ENCODE measurements at regions of chr14 and their contacts with region 1.

Region 1: DNA sequence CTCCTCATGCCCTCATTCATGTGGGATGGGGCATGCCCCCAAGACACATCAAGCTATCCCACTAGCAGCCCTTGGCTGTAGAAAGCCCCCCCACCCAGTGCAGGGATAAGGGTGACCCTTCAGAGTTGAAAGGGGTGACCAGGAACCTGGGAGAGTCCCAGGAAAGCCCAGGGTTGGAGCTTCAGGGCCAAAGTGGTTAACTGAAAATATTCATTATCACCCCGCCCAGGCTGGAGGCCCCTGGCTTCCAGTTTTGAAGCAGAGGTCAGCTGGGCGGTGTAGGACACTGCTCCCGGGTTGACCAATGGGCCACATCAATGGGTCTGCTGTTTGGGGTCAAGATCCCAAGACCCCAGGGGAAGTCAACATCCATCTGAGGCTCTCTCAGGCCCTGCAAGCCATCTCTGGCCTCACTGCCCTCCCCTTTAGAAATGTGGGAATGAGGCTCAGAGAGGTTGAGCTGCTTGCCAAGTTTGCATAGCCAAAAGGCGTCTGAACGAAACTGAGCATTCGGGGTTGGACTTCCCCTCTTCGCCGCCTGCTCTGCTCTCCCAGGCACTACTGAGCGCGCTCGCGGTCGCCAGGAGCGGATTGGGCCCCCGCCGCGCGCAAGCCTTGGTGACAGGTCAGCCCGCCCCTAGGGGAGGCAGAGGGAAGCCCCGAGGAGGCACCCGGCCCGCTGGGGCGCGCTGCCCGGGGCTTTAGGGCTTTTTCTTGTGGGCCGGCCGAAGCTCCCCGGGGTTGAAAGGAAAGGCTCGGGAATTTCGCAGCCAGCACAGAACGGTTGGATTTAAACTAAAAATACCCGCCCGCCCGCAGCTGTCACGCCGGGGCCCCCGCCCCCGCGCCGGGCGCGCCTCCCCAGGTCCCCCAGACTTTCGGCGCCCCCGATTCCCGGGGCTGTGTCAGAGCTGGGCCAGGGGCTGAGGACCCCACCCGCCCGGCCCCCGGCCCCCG is 576 bp downstream of the SYNE3 start:
- DNase-seq: peak; percentile 78 to 90 (median 83)
- ATAC-seq: peak; percentile 43 to 74 (median 67)
- H3K4me3 ChIP-seq: peak overlapping the region; percentile 62 to 93 (median 78)
- H3K27ac ChIP-seq: peak overlapping the region; percentile 83 to 95 (median 90)
- H3K4me1 ChIP-seq: peaks cover 0 to 85% (median 56%) of the 10 kb centered on the region in 12 donors
- H3K27me3 ChIP-seq: no peaks in the 10 kb centered on the region
- CTCF ChIP-seq: peak in 10 of 12 donors; percentile 11 to 56 (median 42)
- POLR2A ChIP-seq: no peak

Region 2: GRCh38 chr14:94816113-94816512 is 699.8 kb before region 1 on chr14:
- intact Hi-C with region 1: no loop called
- DNase-seq: no peak
- ATAC-seq: no peak
- H3K4me3 ChIP-seq: no peak overlapping the region
- H3K27ac ChIP-seq: no peak overlapping the region
- H3K4me1 ChIP-seq: no peaks in the 10 kb centered on the region
- H3K27me3 ChIP-seq: peaks cover 0 to 26% (median 2%) of the 10 kb centered on the region in 9 donors
- CTCF ChIP-seq: no peak
- POLR2A ChIP-seq: no peak

Region 3: GRCh38 chr14:95472819-95473251 is 43.0 kb before region 1 on chr14:
- intact Hi-C with region 1: loop called in 2 of 10 experiments (anchors 5 kb)
- DNase-seq: peak in 1 of 5 donors; percentile 56
- ATAC-seq: peak; percentile 46 to 65 (median 52)
- H3K4me3 ChIP-seq: no peak overlapping the region
- H3K27ac ChIP-seq: peak overlapping the region in 4 of 12 donors; percentile 14 to 34 (median 22)
- H3K4me1 ChIP-seq: peaks cover 0 to 44% (median 30%) of the 10 kb centered on the region in 12 donors
- H3K27me3 ChIP-seq: no peaks in the 10 kb centered on the region
- CTCF ChIP-seq: no peak
- POLR2A ChIP-seq: no peak

Region 4: GRCh38 chr14:95483309-95484165 is 32.3 kb before region 1 on chr14:
- intact Hi-C with region 1: loop called in 2 of 10 experiments (anchors 5 kb)
- DNase-seq: peak; percentile 63 to 90 (median 79)
- ATAC-seq: peak; percentile 74 to 95 (median 93)
- H3K4me3 ChIP-seq: no peak overlapping the region
- H3K27ac ChIP-seq: peak overlapping the region; percentile 51 to 87 (median 74)
- H3K4me1 ChIP-seq: peaks cover 9 to 72% (median 34%) of the 10 kb centered on the region in 12 donors
- H3K27me3 ChIP-seq: no peaks in the 10 kb centered on the region
- CTCF ChIP-seq: no peak
- POLR2A ChIP-seq: no peak

Region 5: DNA sequence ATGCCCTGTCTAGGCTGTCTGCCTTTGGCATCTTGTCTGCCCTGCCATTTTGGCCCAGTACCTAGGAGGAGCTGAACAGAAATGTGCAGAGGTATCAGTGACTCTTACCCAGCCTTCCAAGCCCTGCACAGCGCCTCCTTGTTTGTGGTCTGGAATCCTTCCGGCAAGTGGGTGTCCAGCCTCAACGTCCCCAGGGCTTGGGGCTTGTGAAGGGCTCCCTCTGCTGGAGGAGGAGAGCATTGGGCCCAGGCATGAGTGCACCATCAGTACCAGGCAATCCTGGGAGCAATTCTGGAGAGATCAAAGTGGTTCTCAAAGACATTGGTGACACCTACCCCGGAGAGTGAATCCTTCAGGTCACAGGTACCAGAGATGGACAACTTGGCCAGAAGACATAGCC is 167.9 kb after region 1 on chr14:
- intact Hi-C with region 1: no loop called
- DNase-seq: no peak
- ATAC-seq: peak in 1 of 4 donors; percentile 24
- H3K4me3 ChIP-seq: no peak overlapping the region
- H3K27ac ChIP-seq: no peak overlapping the region
- H3K4me1 ChIP-seq: no peaks in the 10 kb centered on the region
- H3K27me3 ChIP-seq: peaks cover 0 to 42% (median 0%) of the 10 kb centered on the region in 9 donors
- CTCF ChIP-seq: peak in 8 of 12 donors; percentile 8 to 50 (median 22)
- POLR2A ChIP-seq: no peak

Region 6: DNA sequence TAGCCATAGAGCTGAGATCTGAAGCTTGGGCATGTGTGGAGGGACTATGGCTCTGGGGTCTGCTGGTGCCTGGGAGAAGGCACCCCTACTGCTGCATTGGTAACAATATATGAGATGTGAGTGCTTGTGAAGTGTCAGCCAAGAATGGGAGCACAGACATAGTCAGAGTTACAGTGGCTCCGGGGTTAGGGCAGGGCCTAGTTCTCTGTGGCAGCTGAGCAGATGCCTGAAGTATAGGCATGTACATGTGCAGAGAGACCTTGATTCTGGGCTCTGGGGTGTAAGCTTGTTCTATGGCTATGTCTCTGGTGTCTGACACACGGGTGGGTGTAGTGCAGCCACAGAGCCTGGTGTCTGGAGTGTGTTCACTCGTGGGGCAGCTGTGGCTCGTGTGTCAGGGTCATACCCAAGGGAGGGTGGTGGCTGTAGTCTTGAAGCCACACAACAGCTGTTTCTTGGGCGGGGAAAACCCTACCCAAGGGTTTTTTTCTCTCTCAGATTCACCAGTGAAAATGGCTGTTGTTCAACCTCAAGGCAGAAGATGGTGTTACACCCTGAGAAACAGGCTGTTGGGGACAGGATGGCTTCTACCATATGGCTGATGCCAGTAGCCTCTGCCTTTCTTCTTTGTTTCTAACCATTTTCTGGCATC is 209.9 kb after region 1 on chr14:
- intact Hi-C with region 1: no loop called
- DNase-seq: no peak
- ATAC-seq: no peak
- H3K4me3 ChIP-seq: no peak overlapping the region
- H3K27ac ChIP-seq: no peak overlapping the region
- H3K4me1 ChIP-seq: no peaks in the 10 kb centered on the region
- H3K27me3 ChIP-seq: peaks cover 0 to 40% (median 2%) of the 10 kb centered on the region in 9 donors
- CTCF ChIP-seq: no peak
- POLR2A ChIP-seq: no peak